ENCODE measurements at regions of chrX and their contacts with region 1.

Region 1: DNA sequence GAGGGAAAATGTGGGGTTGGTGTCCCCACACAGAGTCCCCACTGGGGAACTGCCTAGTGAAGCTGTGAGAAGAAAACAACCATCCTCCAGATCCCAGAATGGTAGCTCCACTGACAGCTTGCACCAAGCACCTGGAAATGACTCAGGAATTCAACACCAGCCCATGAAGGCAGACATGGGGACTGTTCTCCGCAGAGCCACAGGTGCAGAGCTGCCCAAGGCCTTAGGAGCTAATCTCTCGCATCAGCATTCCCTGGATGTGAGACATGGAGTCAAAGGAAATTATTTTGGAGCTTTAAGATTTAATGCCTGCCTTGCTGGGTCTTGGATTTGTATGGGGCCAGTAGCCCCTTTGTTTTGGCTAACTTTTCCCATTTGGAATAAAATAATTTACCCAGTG is 367.9 kb downstream of the FAM133A start:
- DNase-seq: no peak
- ATAC-seq: no peak
- H3K4me3 ChIP-seq: no peak overlapping the region
- H3K27ac ChIP-seq: no peak overlapping the region
- H3K4me1 ChIP-seq: no peaks in the 10 kb centered on the region
- H3K27me3 ChIP-seq: peaks cover 0 to 4% (median 0%) of the 10 kb centered on the region in 9 donors
- CTCF ChIP-seq: no peak
- POLR2A ChIP-seq: no peak

Region 2: GRCh38 chrX:94065091-94065490 is 23.2 kb after region 1 on chrX:
- intact Hi-C with region 1: no loop called
- DNase-seq: no peak
- ATAC-seq: no peak
- H3K4me3 ChIP-seq: no peak overlapping the region
- H3K27ac ChIP-seq: no peak overlapping the region
- H3K4me1 ChIP-seq: no peaks in the 10 kb centered on the region
- H3K27me3 ChIP-seq: no peaks in the 10 kb centered on the region
- CTCF ChIP-seq: no peak
- POLR2A ChIP-seq: no peak

Region 3: GRCh38 chrX:94097868-94098267 is 56.0 kb after region 1 on chrX:
- intact Hi-C with region 1: loop called in 1 of 10 experiments (anchors 10 kb)
- DNase-seq: no peak
- ATAC-seq: no peak
- H3K4me3 ChIP-seq: no peak overlapping the region
- H3K27ac ChIP-seq: no peak overlapping the region
- H3K4me1 ChIP-seq: no peaks in the 10 kb centered on the region
- H3K27me3 ChIP-seq: no peaks in the 10 kb centered on the region
- CTCF ChIP-seq: no peak
- POLR2A ChIP-seq: no peak

Region 4: DNA sequence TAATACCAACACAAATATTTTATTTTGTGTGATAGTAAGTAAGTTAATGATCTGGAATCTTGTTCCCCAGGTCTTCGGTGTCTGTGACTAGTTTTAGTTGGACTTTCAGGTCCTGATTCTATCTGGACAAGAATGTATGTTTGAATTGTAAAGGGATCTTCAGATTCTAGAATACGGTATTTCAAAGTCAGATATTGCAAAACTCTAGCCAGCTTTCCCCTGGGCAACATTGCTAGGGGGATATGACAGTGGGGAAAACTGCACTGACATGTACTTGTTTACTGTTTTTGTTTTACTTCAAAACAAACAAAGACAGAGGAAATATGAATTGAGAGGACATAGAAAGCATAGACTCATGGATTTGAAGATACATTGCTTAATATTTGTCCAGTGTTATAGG is 121.1 kb after region 1 on chrX:
- intact Hi-C with region 1: no loop called
- DNase-seq: no peak
- ATAC-seq: no peak
- H3K4me3 ChIP-seq: no peak overlapping the region
- H3K27ac ChIP-seq: no peak overlapping the region
- H3K4me1 ChIP-seq: no peaks in the 10 kb centered on the region
- H3K27me3 ChIP-seq: no peaks in the 10 kb centered on the region
- CTCF ChIP-seq: no peak
- POLR2A ChIP-seq: no peak

Measured in heart left ventricle (tissue), 16 donors.